ENCODE measurements at regions of chr15 and their contacts with region 1.

Region 1: DNA sequence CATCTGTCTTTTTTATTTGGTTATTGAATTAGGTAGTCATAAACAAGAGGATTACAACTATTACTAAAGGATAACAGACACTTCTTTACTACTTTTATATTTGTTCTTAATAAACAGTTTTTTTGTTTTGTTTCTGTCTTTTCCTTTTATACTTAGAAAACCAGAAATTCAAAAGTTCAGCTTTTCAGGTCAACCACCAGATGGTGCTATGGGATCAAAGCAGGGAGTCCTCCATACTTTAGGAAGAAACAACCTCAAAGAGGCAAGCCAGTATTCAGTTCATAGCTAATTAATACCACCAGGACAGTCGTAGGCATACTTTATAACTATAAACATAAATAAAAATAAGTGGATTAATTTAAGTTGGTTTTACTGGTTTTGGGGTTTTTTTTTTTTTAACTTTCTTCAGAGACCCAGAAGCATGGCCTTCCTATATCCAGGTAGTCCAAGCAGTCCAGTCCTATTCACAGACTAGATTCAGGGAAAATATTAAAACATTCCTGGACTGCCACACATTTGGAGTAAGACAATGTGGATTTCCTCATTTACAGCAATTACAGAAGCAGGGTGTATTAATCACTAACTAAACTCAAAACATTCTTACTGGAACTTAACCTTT is 16.0 kb upstream of the EID1 start:
- DNase-seq: no peak
- ATAC-seq: peak; percentile 79

Region 2: DNA sequence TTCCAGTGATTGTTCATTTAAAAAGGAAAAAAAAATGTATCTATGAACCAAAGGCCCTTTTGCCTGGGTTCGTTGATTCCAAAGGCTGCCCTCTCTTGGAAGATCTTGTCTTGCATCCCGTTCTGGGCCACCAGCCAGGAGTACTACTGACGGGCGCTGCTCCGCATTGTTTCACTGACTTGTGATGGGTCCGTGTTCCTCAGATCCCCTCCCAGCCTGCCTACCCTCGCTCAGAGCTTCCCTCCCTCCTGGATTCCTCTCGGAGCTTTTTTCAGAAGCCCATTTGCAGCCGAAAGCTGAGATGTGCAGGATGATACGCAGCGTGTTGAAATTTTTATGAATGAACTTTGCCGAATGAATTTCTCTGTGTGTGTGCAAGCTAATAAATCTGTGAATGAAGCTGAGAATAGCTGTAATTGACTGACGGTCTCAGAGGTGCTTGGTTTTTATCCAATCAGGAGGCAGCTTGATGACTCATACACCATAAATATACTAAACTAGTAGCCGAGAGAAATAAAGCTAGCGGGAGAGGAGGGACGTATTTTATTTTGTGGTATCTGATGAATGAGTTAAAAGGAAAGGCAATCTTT is 101.7 kb after region 1 on chr15 and contains the start of gene SHC4:
- intact Hi-C with region 1: loop called (anchors 5 kb)
- DNase-seq: peak; percentile 85
- ATAC-seq: peak; percentile 84
- total RNA-seq, gene SHC4: 74.2 TPM

Region 3: DNA sequence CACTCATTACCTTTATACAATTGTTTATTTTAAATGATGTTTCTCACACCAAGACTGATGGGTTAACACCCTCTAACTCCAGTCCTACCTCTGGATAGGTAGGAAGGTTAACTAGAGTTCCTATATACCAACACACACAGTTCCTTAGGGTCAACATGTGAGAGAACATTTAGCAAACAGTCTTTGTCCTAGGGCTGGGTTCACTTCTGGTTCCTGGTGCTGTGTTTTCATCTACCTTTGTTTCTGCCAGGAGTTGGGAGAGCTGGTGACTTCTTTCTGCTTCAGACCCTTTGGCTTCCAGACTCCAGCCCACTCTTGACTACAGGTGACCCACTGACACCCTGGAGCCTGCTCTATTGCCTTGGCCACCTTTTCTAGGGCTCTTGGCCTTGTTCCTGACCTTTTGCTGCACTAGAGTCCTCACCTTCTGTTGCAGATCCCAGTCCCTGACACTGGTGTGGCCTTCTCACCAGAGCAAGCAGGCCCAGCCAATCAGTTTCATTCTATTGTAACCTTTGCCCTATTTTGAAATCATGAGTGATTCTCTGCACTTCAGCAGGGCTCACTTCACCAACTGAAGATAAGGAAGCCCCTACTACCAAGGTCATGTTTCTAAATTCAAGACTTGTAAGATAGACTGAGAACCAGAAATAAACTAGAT is 234.3 kb after region 1 on chr15:
- intact Hi-C with region 1: no loop called
- DNase-seq: no peak
- ATAC-seq: no peak

Region 4: GRCh38 chr15:49155110-49155833 is 293.4 kb after region 1 on chr15 and contains the start of gene COPS2:
- intact Hi-C with region 1: loop called (anchors 10 kb)
- DNase-seq: peak; percentile 94
- ATAC-seq: peak; percentile 99
- total RNA-seq, gene COPS2: 88.5 TPM